WTC11 (cell line): ENCODE measurements at regions of chr19 and their contacts with region 1.

Region 1: DNA sequence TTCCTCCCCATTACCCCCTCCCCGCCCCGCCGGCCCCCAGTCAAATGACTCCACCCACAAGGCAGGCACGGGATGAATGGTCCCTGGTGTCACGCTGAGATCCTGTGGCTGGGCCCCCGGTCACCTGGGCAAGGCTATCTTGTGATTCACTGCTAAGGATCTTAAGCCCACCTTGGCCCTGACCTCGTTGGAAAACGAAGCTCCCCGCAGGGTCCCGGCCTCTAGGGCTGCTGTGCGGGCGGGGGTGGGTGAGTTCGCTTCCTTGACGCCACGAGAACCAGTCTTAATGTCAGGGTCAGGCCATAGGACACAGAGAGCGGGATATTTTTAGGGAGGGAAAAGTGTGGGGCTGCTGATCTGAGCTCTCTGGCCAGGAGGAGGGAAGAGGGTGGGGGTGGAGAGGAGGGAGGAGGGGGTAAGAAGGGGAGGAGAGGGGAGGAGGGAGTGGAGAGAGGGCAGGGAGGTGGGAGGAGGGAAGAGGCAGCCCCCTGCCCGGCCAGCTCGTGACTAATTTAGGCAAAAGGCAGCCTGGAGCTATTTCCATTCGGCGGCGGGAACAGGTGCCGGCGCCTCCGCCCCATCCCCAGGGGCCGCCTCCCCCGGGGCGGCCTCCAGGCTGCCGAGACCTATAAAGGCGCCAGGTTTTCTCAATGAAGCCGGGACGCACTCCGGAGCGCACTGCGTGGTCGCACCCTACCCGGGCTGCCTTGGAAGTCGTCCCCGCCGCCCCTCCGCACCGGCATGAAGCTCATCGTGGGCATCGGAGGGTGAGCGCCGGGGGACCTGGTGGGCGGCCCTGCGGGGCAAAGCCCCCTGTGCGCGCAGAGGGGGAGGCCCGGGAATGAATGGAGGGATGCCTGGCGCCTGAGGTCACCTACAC is at the start of gene NMRK2:
- DNase-seq: peak; percentile 78
- ATAC-seq: peak; percentile 80
- H3K4me3 Mint-ChIP-seq: peak within 1 kb of the TSS; percentile 80
- H3K27ac Mint-ChIP-seq: peak within 1 kb of the TSS; percentile 96
- H3K4me1 Mint-ChIP-seq: peaks cover 7% of the 10 kb centered on the region
- H3K27me3 Mint-ChIP-seq: no peaks in the 10 kb centered on the region
- CTCF ChIP-seq: no peak
- total RNA-seq, gene NMRK2: 50.4 to 61.9 TPM (median 51.1 TPM) in 3 replicates

Region 2: GRCh38 chr19:3788996-3789778 is 144.0 kb before region 1 on chr19:
- CTCF ChIA-PET with region 1: no interaction called
- POLR2A ChIA-PET with region 1: no interaction called
- DNase-seq: no peak
- ATAC-seq: no peak
- H3K4me3 Mint-ChIP-seq: no peak overlapping the region
- H3K27ac Mint-ChIP-seq: no peak overlapping the region
- H3K4me1 Mint-ChIP-seq: peaks cover 7% of the 10 kb centered on the region
- H3K27me3 Mint-ChIP-seq: peaks cover 28% of the 10 kb centered on the region
- CTCF ChIP-seq: no peak

Region 3: GRCh38 chr19:3880471-3881271 is 52.5 kb before region 1 on chr19 and contains the start of gene ATCAY:
- CTCF ChIA-PET with region 1: interaction called, 4 read pairs
- POLR2A ChIA-PET with region 1: interaction called, 16 read pairs
- DNase-seq: peak; percentile 69
- ATAC-seq: peak; percentile 71
- H3K4me3 Mint-ChIP-seq: peak within 1 kb of the TSS; percentile 85
- H3K27ac Mint-ChIP-seq: peak within 1 kb of the TSS; percentile 54; the same call in 1 of the 2 replicates
- H3K4me1 Mint-ChIP-seq: peaks cover 13% of the 10 kb centered on the region; the same call in 1 of the 2 replicates
- H3K27me3 Mint-ChIP-seq: peaks cover 10% of the 10 kb centered on the region
- CTCF ChIP-seq: no peak
- total RNA-seq, gene ATCAY: 21.1 to 23.5 TPM (median 21.3 TPM) in 3 replicates

Region 4: DNA sequence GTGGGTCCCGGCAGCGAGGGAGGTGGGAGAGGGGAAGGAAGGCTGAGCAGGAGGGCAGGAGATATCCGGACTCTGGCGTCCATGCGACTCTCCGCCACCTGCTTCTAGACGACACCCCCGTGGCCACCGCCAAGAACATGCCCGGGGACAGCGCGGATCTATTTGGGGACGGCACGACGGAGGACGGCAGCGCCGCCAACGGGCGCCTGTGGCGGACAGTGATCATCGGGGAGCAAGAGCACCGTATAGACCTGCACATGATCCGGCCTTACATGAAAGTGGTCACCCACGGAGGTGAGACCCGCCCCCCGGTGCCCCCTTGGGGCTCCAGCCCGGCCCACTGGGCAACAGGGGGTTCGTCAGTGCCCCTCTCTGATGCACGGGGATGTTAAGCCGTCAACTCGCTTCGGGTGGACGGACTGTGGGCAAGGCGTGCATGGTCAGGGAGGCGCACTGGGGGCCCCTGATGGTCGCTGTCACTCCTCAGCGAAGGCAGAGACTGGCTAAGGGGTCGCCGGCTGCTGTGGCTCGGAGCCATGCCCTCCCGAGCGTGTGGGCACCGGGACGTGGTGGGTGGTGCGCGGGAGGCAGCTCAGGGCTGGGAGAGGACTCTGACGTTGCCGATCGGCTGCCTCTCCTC is 25.4 kb before region 1 on chr19:
- CTCF ChIA-PET with region 1: no interaction called
- POLR2A ChIA-PET with region 1: no interaction called
- DNase-seq: no peak
- ATAC-seq: no peak
- H3K4me3 Mint-ChIP-seq: no peak overlapping the region
- H3K27ac Mint-ChIP-seq: no peak overlapping the region
- H3K4me1 Mint-ChIP-seq: no peaks in the 10 kb centered on the region
- H3K27me3 Mint-ChIP-seq: no peaks in the 10 kb centered on the region
- CTCF ChIP-seq: no peak